Calu3 (cell line): ENCODE measurements at regions of chr11 and their contacts with region 1.

Region 1: DNA sequence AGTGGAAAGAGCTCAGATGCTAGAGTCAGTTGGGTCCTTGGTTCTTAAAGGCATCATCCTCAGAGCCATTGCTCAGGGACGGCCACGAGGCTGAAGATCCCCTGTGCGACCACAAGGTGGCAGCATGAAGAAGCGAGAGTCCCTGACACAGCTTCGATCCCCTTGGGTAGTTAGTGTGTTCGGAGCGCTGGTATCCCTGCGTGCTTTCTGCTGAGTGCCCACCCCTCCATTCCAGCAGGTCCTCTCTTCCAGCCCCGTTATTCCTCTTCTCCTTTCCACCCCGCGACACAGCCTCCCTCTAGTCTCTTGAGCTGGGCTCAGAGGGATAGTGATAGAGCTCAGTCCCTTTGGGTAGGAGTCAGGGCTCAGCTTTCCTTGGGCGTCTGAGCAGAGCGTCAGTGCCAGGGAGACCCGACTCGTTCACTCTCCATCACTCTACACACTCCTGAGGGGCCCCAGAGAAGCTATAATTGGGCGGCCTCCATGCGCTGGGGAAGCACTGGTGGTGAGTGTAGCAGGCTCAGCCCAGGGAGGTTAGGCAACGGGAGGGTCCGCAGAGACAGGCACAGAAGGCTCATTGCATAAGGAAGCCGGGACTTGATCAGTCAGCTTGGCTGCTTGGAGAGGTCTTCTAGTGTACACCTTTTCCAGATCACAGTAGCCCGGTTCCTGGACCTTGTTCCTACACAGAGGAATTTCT is at the start of gene OR51D1:
- DNase-seq: peak; percentile 80
- H3K4me3 Mint-ChIP-seq: no peak within 1 kb of the TSS
- H3K27ac Mint-ChIP-seq: no peak within 1 kb of the TSS
- H3K4me1 Mint-ChIP-seq: no peaks in the 10 kb centered on the region
- H3K27me3 Mint-ChIP-seq: peaks cover 25% of the 10 kb centered on the region
- CTCF ChIP-seq: peak; percentile 83
- total RNA-seq, gene OR51D1: not detected in 2 replicates

Region 2: DNA sequence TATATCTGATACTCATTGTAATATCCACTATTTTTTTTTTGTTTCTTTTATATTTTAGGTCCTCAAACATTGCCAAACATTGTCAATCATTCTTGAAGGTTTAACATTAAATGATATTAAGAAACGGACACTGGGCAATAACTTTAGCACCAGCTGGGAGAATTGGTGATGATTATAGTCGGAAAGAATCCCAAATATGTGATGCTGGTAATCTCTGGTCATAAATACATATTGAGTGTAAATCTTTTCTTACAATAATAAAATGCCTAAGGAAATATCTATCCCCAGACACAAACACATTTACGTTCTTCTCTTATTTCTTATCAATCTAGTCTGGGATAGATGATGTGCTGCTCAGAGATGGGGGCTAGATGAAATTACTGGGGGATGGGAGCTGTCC is 35.4 kb after region 1 on chr11:
- CTCF ChIA-PET with region 1: no interaction called
- intact Hi-C with region 1: loop called (anchors 2 kb)
- DNase-seq: no peak
- H3K4me3 Mint-ChIP-seq: no peak overlapping the region
- H3K27ac Mint-ChIP-seq: no peak overlapping the region
- H3K4me1 Mint-ChIP-seq: peaks cover 8% of the 10 kb centered on the region
- H3K27me3 Mint-ChIP-seq: peaks cover 23% of the 10 kb centered on the region
- CTCF ChIP-seq: no peak

Region 3: DNA sequence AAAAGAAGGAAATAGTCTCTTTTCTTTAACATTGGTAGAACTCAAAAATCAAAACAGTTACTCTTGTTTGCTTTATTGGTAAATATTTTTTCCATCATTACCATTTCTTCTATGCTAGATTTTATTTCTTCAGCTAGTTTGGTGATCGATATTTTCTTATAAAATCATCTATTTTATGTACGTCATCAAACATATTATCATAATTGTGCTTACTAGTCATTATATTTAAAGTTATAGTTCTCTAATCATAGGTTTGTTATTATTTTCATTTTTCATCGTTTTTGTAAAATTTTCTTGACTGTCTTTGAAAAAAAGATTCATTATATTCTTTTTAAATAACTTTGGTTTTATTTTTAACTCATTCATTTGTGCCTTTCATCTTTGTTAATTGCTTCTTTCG is 181.1 kb after region 1 on chr11:
- CTCF ChIA-PET with region 1: no interaction called
- intact Hi-C with region 1: loop called (anchors 2 kb)
- DNase-seq: no peak
- H3K4me3 Mint-ChIP-seq: no peak overlapping the region
- H3K27ac Mint-ChIP-seq: no peak overlapping the region
- H3K4me1 Mint-ChIP-seq: peaks cover 7% of the 10 kb centered on the region
- H3K27me3 Mint-ChIP-seq: no peaks in the 10 kb centered on the region
- CTCF ChIP-seq: no peak

Region 4: GRCh38 chr11:4826425-4826824 is 189.3 kb after region 1 on chr11:
- CTCF ChIA-PET with region 1: interaction called, 25 read pairs
- intact Hi-C with region 1: loop called (anchors 1 kb)
- DNase-seq: no peak
- H3K4me3 Mint-ChIP-seq: no peak overlapping the region
- H3K27ac Mint-ChIP-seq: no peak overlapping the region
- H3K4me1 Mint-ChIP-seq: no peaks in the 10 kb centered on the region
- H3K27me3 Mint-ChIP-seq: no peaks in the 10 kb centered on the region
- CTCF ChIP-seq: peak; percentile 23

Region 5: DNA sequence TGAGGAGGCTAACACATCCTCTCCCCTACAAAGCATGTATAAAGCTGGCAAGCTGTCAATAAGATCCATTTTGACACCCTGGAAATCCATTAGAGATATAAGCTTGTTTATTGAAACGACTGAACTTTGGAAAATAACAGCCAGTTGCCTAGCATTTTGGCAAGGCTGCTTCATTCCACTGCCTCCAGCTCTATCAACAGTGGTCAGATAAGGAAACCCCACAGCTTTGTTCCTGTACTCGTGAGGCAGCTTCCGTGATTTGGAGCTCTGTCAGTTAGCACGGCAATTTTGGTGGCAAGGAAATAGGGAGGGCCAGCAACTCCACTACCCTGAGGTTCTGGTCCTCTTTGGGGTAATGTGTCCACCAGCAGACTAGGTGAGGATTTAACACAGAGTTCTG is 213.9 kb after region 1 on chr11:
- CTCF ChIA-PET with region 1: no interaction called
- intact Hi-C with region 1: no loop called
- DNase-seq: no peak
- H3K4me3 Mint-ChIP-seq: no peak overlapping the region
- H3K27ac Mint-ChIP-seq: no peak overlapping the region
- H3K4me1 Mint-ChIP-seq: no peaks in the 10 kb centered on the region
- H3K27me3 Mint-ChIP-seq: peaks cover 19% of the 10 kb centered on the region
- CTCF ChIP-seq: no peak

Region 6: GRCh38 chr11:5004424-5005274 is 367.5 kb after region 1 on chr11:
- CTCF ChIA-PET with region 1: no interaction called
- intact Hi-C with region 1: loop called (anchors 1 kb)
- DNase-seq: peak; percentile 58
- H3K4me3 Mint-ChIP-seq: no peak overlapping the region
- H3K27ac Mint-ChIP-seq: no peak overlapping the region
- H3K4me1 Mint-ChIP-seq: no peaks in the 10 kb centered on the region
- H3K27me3 Mint-ChIP-seq: peaks cover 13% of the 10 kb centered on the region
- CTCF ChIP-seq: peak; percentile 37